Right ventricle myocardium superior (tissue), 1 donor: ENCODE measurements at regions of chr3 and their contacts with region 1.

Region 1: DNA sequence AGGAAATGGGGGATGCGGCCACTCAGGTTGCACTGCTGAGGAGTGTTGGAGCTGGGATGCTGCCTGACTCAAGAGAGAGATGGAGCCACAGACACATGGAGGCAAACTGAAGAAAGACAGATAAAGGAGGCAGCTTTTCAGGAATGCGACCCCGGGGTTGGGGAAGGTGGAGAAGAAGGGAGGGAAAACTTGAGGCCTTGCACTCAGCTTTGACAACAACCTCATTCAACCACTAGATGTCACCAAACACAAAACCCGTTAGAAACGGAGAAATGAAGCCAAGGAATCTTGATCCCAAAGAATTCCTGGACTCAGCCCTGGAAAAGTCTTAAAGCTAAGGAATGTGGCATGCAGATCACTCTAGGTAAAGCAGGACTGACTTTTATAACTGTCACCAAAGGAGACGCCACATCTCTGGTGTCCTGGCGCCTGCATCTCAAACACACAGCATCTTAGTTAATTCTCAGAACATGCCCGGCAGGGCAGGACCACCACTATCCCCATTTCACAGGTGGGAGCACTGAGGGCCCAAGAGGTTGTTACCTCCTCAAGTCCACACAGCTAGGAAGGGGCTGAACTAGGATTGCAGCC is 59.6 kb upstream of the LMCD1 start:
- DNase-seq: no peak
- ATAC-seq: peak; percentile 69

Region 2: GRCh38 chr3:8529181-8529637 is 87.1 kb after region 1 on chr3:
- intact Hi-C with region 1: no loop called
- DNase-seq: peak; percentile 36
- ATAC-seq: peak; percentile 33

Region 3: GRCh38 chr3:8607234-8608040 is 165.4 kb after region 1 on chr3:
- intact Hi-C with region 1: loop called (anchors 1 kb)
- DNase-seq: peak; percentile 81
- ATAC-seq: peak; percentile 97

Region 4: GRCh38 chr3:8622873-8623691 is 181.0 kb after region 1 on chr3:
- intact Hi-C with region 1: loop called (anchors 5 kb)
- DNase-seq: peak; percentile 82
- ATAC-seq: peak; percentile 91